HepG2 (cell line): ENCODE measurements at regions of chr10 and their contacts with region 1.

Region 1: DNA sequence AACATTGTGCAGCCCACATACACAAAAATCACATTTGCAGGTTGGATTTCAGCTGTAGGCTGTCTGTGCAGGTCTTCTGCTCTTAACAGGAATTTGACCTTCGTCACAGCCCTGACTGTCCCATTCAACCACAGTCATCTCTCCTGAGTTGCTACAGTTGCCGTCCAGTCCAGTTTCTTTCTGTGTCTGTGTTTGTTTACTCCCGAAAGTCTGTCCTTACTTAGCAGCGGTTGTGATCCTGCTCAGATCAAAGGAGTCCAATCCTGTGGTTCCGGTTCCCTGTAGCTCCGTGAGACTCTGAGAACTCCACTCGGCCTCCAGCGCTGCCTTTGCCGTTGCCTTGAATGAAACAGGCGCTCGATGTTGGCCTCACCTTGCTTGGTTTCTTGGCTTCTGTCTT is 111.6 kb upstream of the GATA3 start:
- DNase-seq: peak; percentile 91
- ATAC-seq: peak; percentile 97
- H3K4me3 ChIP-seq: peak overlapping the region in 2 of 3 experiments; percentile 19 to 55; a peak in 3 of 6 replicates
- H3K27ac ChIP-seq: peak overlapping the region; percentile 71
- H3K4me1 ChIP-seq: peaks cover 54% of the 10 kb centered on the region
- H3K27me3 ChIP-seq: no peaks in the 10 kb centered on the region
- CTCF ChIP-seq: no peak
- EP300 ChIP-seq: peak in 1 of 2 experiments; percentile 25; a peak in 1 of 4 replicates
- POLR2A ChIP-seq: peak in 1 of 2 experiments; percentile 50; a peak in 2 of 4 replicates
- RAD21 ChIP-seq: no peak

Region 2: DNA sequence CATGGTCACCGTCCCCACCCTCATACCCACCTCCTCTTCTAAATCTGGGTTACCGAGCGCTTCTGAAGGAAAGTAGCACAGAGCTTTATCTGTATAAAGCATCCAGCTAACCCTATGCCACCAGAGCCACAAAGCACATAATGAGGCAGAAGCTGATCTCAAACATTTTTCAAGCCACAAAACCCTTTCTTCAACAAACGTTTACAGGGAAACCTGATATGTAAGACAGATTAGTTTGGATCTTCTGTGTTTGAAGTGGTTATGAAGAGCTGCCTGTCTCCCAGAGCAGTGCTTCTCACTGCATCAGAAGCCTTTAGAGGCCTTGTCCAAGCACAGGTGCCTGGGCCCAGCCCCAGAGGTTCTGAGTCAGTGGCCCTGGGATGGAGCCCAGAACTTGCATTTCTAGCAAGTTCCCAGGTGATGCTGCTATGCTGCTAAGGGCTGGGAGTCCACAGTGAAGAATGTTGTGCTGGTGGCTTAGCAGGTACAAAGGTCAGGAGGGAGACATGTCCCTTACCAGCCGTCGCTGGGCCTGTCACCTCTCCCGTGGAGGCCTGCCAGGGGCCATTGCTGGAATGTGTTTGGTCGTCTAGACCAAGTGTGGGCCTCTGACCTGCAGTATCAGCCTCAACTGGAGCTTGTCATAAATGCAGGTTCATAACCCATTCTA is 34.2 kb before region 1 on chr10:
- CTCF ChIA-PET with region 1: no interaction called
- POLR2A ChIA-PET with region 1: no interaction called
- in situ Hi-C with region 1: no loop called
- intact Hi-C with region 1: loop called (anchors 2 kb)
- DNase-seq: peak; percentile 92
- ATAC-seq: peak; percentile 100
- H3K4me3 ChIP-seq: peak overlapping the region in 1 of 3 experiments; percentile 8; a peak in 1 of 6 replicates
- H3K27ac ChIP-seq: peak overlapping the region; percentile 29
- H3K4me1 ChIP-seq: peaks cover 24% of the 10 kb centered on the region
- H3K27me3 ChIP-seq: no peaks in the 10 kb centered on the region
- CTCF ChIP-seq: peak; percentile 37; the same call in 1 of the 2 replicates
- EP300 ChIP-seq: peak; percentile 32 to 60; a peak in 3 of 4 replicates
- POLR2A ChIP-seq: no peak
- RAD21 ChIP-seq: peak; percentile 68; the same call in 1 of the 2 replicates

Region 3: GRCh38 chr10:7932301-7933036 is 10.4 kb before region 1 on chr10:
- CTCF ChIA-PET with region 1: no interaction called
- POLR2A ChIA-PET with region 1: interaction called, 12 read pairs
- in situ Hi-C with region 1: no loop called
- intact Hi-C with region 1: loop called (anchors 1 kb)
- DNase-seq: peak; percentile 98
- ATAC-seq: peak; percentile 100
- H3K4me3 ChIP-seq: peak overlapping the region in 2 of 3 experiments; percentile 29 to 45; a peak in 3 of 6 replicates
- H3K27ac ChIP-seq: peak overlapping the region; percentile 74
- H3K4me1 ChIP-seq: peaks cover 46% of the 10 kb centered on the region
- H3K27me3 ChIP-seq: no peaks in the 10 kb centered on the region
- CTCF ChIP-seq: no peak
- EP300 ChIP-seq: peak in 1 of 2 experiments; percentile 88; a peak in 2 of 4 replicates
- POLR2A ChIP-seq: no peak
- RAD21 ChIP-seq: no peak